ENCODE measurements at regions of chr17 and their contacts with region 1.

Region 1: GRCh38 chr17:47840740-47841603 is at the start of gene SCRN2:
- DNase-seq: peak; percentile 83 to 85 (median 84)
- H3K4me3 ChIP-seq: peak within 1 kb of the TSS; percentile 77 to 98 (median 91)
- H3K27ac ChIP-seq: peak within 1 kb of the TSS in 1 of 2 experiments; percentile 75
- H3K4me1 ChIP-seq: peaks cover 0 to 25% (median 17%) of the 10 kb centered on the region in 4 experiments
- H3K27me3 ChIP-seq: peaks cover 1 to 16% (median 7%) of the 10 kb centered on the region in 5 experiments

Region 2: GRCh38 chr17:47857551-47858446 is 16.8 kb after region 1 on chr17:
- CTCF ChIA-PET with region 1: interaction called, 11 read pairs
- POLR2A ChIA-PET with region 1: no interaction called
- DNase-seq: no peak
- H3K4me3 ChIP-seq: no peak overlapping the region
- H3K27ac ChIP-seq: no peak overlapping the region
- H3K4me1 ChIP-seq: peaks cover 0 to 9% (median 6%) of the 10 kb centered on the region in 4 experiments
- H3K27me3 ChIP-seq: peaks cover 0 to 32% (median 23%) of the 10 kb centered on the region in 5 experiments

Region 3: GRCh38 chr17:47872021-47872650 is 31.2 kb after region 1 on chr17:
- CTCF ChIA-PET with region 1: interaction called, 20 read pairs
- POLR2A ChIA-PET with region 1: no interaction called
- DNase-seq: no peak
- H3K4me3 ChIP-seq: peak overlapping the region in 2 of 7 experiments; percentile 32 to 37
- H3K27ac ChIP-seq: no peak overlapping the region
- H3K4me1 ChIP-seq: peaks cover 0 to 29% (median 18%) of the 10 kb centered on the region in 4 experiments
- H3K27me3 ChIP-seq: peaks cover 0 to 42% (median 19%) of the 10 kb centered on the region in 5 experiments

Region 4: GRCh38 chr17:47895856-47896671 is 55.1 kb after region 1 on chr17 and contains the start of gene SP2:
- CTCF ChIA-PET with region 1: interaction called, 575 read pairs
- POLR2A ChIA-PET with region 1: interaction called, 9 read pairs
- DNase-seq: peak; percentile 100
- H3K4me3 ChIP-seq: peak within 1 kb of the TSS; percentile 66 to 98 (median 94)
- H3K27ac ChIP-seq: peak within 1 kb of the TSS; percentile 91 to 97
- H3K4me1 ChIP-seq: peaks cover 15 to 31% (median 26%) of the 10 kb centered on the region in 4 experiments
- H3K27me3 ChIP-seq: no peaks in the 10 kb centered on the region

Region 5: GRCh38 chr17:47978324-47978723 is 137.4 kb after region 1 on chr17:
- CTCF ChIA-PET with region 1: interaction called, 10 read pairs
- POLR2A ChIA-PET with region 1: no interaction called
- DNase-seq: peak; percentile 57 to 81 (median 79)
- H3K4me3 ChIP-seq: no peak overlapping the region
- H3K27ac ChIP-seq: no peak overlapping the region
- H3K4me1 ChIP-seq: peaks cover 4 to 35% (median 30%) of the 10 kb centered on the region in 4 experiments
- H3K27me3 ChIP-seq: no peaks in the 10 kb centered on the region